Tibial artery (tissue), 4 donors: ENCODE measurements at regions of chr3 and their contacts with region 1.

Region 1: GRCh38 chr3:188270423-188270972 is 116.5 kb downstream of the LPP start:
- DNase-seq: peak in 1 of 2 donors; percentile 65
- H3K4me3 ChIP-seq: no peak overlapping the region
- H3K27ac ChIP-seq: peak overlapping the region; percentile 90 to 96
- H3K4me1 ChIP-seq: peaks cover 0 to 98% (median 86%) of the 10 kb centered on the region in 4 donors
- H3K27me3 ChIP-seq: no peaks in the 10 kb centered on the region
- CTCF ChIP-seq: no peak

Region 2: GRCh38 chr3:188052169-188053030 is 218.1 kb before region 1 on chr3:
- intact Hi-C with region 1: loop called (anchors 5 kb)
- DNase-seq: peak; percentile 93 to 98
- H3K4me3 ChIP-seq: peak overlapping the region; percentile 39 to 43
- H3K27ac ChIP-seq: peak overlapping the region; percentile 91 to 94
- H3K4me1 ChIP-seq: peaks cover 11 to 52% (median 41%) of the 10 kb centered on the region in 4 donors
- H3K27me3 ChIP-seq: no peaks in the 10 kb centered on the region
- CTCF ChIP-seq: peak; percentile 62 to 67

Region 3: DNA sequence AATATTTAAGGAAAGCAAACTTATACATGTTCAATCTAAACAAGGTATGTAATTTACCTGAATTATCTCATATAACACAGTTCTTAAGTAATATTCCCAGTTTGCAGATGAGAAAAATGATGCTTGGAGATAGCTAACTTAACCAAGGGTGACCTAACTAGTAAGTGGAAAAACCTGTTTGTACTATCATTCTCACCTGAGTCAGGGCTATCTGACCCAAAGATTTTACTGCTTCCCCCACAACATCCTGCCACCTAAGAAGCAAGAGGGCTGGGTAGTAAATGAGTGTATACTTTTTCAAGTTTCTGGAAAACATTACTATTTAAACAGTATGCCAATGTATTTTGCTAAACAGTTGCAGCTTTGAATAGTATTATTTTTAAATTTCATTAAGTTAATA is 1371.3 kb after region 1 on chr3:
- intact Hi-C with region 1: no loop called
- DNase-seq: no peak
- H3K4me3 ChIP-seq: no peak overlapping the region
- H3K27ac ChIP-seq: no peak overlapping the region
- H3K4me1 ChIP-seq: no peaks in the 10 kb centered on the region
- H3K27me3 ChIP-seq: no peaks in the 10 kb centered on the region
- CTCF ChIP-seq: no peak